ENCODE measurements at regions of chrX and their contacts with region 1.

Region 1: DNA sequence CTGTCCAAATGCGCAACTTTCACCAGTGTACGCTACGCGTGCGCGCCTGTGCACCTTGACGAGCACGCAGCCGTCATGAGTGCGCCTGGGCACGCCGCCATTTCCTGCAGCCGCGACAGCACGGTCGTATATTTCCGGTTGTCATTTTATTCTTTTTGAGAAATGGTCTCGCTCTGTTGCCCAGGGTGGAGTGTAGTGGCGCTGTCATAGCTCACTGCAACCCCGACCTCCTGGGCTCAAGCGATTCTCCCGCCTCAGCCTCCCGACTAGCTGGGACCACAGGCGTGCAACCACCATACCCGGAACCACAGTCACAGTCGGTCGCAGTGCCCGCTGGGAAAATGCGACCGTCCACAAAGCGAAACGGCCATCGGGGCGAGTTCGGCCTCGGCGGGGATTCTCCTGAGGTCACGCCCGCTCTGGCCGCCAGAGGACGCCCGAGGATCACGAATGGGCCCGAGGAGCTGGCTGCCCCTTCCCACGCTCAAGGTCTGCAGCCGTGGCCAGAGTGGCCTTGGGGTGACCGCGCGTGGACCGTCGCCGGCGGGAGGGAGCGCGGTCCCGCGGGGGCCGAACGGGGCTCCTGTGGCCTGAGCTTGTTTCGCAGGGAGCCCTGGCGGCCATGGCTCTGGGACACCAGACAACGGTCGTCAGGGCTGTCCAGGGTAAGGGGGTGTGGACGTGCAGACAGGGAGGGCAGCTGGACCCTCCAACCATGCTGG is 23.7 kb upstream of the PNMA3 start:
- DNase-seq: peak; percentile 75 to 83
- ATAC-seq: peak; percentile 82 to 96 (median 88)
- H3K4me3 ChIP-seq: peak overlapping the region; percentile 31
- H3K27ac ChIP-seq: no peak overlapping the region
- H3K4me1 ChIP-seq: no peaks in the 10 kb centered on the region
- H3K27me3 ChIP-seq: no peaks in the 10 kb centered on the region
- CTCF ChIP-seq: peak; percentile 78

Region 2: GRCh38 chrX:152575331-152575730 is 457.2 kb before region 1 on chrX:
- intact Hi-C with region 1: no loop called
- DNase-seq: no peak
- ATAC-seq: no peak
- H3K4me3 ChIP-seq: no peak overlapping the region
- H3K27ac ChIP-seq: no peak overlapping the region
- H3K4me1 ChIP-seq: no peaks in the 10 kb centered on the region
- H3K27me3 ChIP-seq: no peaks in the 10 kb centered on the region
- CTCF ChIP-seq: no peak

Region 3: DNA sequence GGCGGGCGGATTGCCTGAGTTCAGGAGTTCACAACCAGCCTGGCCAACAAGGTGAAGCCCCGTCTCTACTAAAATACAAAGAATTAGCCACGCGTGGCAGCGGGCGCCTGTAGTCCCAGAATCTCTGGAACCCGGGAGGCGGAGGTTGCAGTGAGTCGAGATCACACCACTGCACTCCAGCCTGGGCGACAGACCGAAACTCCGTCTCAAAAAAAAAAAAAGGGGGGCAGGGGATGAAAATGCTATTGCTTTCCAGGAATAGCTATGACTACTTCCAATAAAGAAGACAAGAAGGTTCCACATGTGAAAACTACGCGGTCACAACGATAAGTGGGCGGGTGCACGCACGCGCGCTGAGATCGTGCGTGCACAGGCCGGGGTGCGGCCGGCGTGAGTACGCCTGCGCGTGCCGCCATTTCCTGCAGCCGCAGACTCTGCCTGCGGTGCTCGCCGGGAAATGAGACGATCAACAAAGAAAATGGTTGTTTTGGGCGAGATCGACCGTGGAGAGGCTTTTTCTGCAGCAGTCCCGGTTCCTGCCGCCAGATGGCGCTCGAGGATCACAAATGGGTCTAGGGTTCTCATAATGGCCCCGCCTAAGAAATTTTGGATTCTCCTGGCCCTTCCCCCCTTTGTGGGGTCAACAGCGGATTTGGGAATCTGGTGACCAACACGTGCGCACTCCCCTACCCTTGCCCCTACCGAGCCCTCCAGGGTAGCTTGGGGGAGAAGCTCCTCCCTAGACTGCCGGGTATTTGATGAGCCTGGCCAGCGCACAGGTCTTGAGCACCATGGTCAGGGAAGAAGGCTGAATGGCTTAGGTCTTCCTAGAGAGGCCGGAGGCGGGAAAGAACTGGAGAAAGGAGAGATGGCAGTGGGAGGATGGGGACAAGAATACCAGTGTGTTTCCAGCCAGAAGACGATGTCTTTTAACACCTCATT is 73.8 kb before region 1 on chrX:
- intact Hi-C with region 1: loop called in 1 of 2 experiments (anchors 5 kb)
- DNase-seq: peak; percentile 86 to 94
- ATAC-seq: peak; percentile 95 to 99 (median 98)
- H3K4me3 ChIP-seq: peak overlapping the region; percentile 61
- H3K27ac ChIP-seq: peak overlapping the region; percentile 71
- H3K4me1 ChIP-seq: no peaks in the 10 kb centered on the region
- H3K27me3 ChIP-seq: peaks cover 0 to under 1% (median 0%) of the 10 kb centered on the region in 3 donors
- CTCF ChIP-seq: peak; percentile 92

Region 4: DNA sequence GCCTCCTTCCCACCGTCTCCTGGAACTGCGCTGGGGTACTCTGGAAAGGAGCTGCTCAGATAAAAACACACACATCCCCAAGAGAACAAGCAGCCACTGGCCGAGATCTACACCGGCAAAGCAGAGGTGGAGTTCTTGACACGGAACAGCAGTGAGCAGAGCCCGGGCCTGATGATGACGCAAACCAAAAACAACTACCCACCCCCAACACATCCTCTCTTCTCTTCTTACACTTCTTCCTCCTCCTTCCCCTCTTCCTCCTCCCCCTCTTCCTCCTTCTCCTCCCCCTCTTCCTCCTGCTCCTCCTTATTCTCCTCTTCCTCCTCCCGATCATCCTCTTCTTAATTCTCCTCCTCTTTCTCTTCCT is 43.3 kb before region 1 on chrX:
- intact Hi-C with region 1: no loop called
- DNase-seq: no peak
- ATAC-seq: no peak
- H3K4me3 ChIP-seq: no peak overlapping the region
- H3K27ac ChIP-seq: no peak overlapping the region
- H3K4me1 ChIP-seq: no peaks in the 10 kb centered on the region
- H3K27me3 ChIP-seq: peaks cover 0 to 10% (median 0%) of the 10 kb centered on the region in 3 donors
- CTCF ChIP-seq: no peak

Measured in psoas muscle (tissue), 8 donors.